Activated CD4-positive, alpha-beta T cell treated with anti-CD3 and anti-CD28 coated beads for 36 hours (primary cell): ENCODE measurements at regions of chr19 and their contacts with region 1.

Region 1: GRCh38 chr19:12052497-12053169 is at the start of gene ZNF878:
- DNase-seq: peak; percentile 82
- ATAC-seq: peak; percentile 95
- H3K4me3 Mint-ChIP-seq: peak within 1 kb of the TSS; percentile 66
- H3K27ac Mint-ChIP-seq: peak within 1 kb of the TSS; percentile 2
- H3K4me1 Mint-ChIP-seq: peaks cover 9% of the 10 kb centered on the region
- H3K27me3 Mint-ChIP-seq: peaks cover 14% of the 10 kb centered on the region
- total RNA-seq, gene ZNF878: 1.1 TPM

Region 2: DNA sequence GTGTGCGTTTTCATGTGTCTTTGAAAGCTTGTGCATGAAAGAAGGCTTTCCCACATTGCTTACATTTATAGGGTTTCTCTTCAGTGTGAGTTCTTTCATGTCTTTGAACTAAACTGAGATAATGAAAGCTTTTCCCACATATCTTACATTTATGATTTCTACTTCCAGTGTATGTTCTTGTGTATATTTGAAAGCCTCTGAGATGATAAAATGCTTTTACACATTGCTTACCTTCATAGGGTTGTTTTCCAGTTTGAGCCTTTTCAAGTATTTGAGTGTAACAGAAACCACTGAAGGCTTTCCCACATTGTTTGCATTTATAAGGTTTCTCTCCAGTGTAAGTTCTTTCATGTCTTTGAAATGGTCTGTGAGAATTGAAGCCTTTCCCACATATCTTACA is 295.7 kb before region 1 on chr19:
- CTCF ChIA-PET with region 1: no interaction called
- POLR2A ChIA-PET with region 1: no interaction called
- intact Hi-C with region 1: no loop called
- DNase-seq: no peak
- ATAC-seq: no peak
- H3K4me3 Mint-ChIP-seq: no peak overlapping the region
- H3K27ac Mint-ChIP-seq: no peak overlapping the region
- H3K4me1 Mint-ChIP-seq: no peaks in the 10 kb centered on the region
- H3K27me3 Mint-ChIP-seq: peaks cover 11% of the 10 kb centered on the region

Region 3: DNA sequence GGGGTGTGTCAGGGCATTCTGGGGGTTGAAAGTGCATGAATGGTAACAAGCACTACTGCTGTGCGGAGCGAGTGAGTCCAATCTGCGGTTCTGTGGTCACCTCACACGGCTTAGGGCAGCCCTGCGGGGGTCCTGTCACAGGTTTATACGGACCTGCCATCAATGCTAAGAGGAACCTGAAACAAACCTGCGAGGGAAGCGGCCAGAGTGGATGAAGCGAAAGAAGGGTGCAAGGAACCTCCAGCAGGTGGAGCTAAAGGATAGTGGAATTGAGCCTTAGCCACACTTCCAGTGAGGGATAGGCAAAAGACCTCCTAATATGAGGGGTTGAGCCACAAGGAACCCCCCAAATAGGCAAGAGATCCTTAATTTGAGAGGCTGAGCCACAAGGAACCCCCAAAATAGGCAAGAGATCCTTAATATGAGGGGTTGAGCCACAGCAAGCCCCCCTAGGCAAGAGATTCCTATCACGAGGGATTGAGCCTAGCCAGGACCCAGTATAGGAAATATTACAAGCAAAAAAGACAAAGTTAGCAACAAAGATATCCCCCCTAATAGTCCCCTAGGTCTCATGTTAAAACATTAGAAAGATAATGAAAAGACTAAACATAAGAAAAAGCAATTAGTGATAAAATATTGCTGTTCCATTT is 171.4 kb before region 1 on chr19:
- CTCF ChIA-PET with region 1: interaction called, 3 read pairs
- POLR2A ChIA-PET with region 1: no interaction called
- intact Hi-C with region 1: loop called in 1 of 2 experiments (anchors 5 kb)
- DNase-seq: peak; percentile 75
- ATAC-seq: peak; percentile 77
- H3K4me3 Mint-ChIP-seq: no peak overlapping the region
- H3K27ac Mint-ChIP-seq: no peak overlapping the region
- H3K4me1 Mint-ChIP-seq: no peaks in the 10 kb centered on the region
- H3K27me3 Mint-ChIP-seq: no peaks in the 10 kb centered on the region

Region 4: GRCh38 chr19:11964858-11965645 is 87.6 kb before region 1 on chr19 and contains the start of gene ZNF763:
- CTCF ChIA-PET with region 1: interaction called, 5 read pairs
- POLR2A ChIA-PET with region 1: no interaction called
- intact Hi-C with region 1: loop called in 1 of 2 experiments (anchors 1 kb)
- DNase-seq: peak; percentile 94
- ATAC-seq: peak; percentile 98
- H3K4me3 Mint-ChIP-seq: peak within 1 kb of the TSS; percentile 84
- H3K27ac Mint-ChIP-seq: peak within 1 kb of the TSS; percentile 73
- H3K4me1 Mint-ChIP-seq: peaks cover 20% of the 10 kb centered on the region
- H3K27me3 Mint-ChIP-seq: no peaks in the 10 kb centered on the region
- total RNA-seq, gene ZNF763: 1.1 to 1.2 TPM

Region 5: DNA sequence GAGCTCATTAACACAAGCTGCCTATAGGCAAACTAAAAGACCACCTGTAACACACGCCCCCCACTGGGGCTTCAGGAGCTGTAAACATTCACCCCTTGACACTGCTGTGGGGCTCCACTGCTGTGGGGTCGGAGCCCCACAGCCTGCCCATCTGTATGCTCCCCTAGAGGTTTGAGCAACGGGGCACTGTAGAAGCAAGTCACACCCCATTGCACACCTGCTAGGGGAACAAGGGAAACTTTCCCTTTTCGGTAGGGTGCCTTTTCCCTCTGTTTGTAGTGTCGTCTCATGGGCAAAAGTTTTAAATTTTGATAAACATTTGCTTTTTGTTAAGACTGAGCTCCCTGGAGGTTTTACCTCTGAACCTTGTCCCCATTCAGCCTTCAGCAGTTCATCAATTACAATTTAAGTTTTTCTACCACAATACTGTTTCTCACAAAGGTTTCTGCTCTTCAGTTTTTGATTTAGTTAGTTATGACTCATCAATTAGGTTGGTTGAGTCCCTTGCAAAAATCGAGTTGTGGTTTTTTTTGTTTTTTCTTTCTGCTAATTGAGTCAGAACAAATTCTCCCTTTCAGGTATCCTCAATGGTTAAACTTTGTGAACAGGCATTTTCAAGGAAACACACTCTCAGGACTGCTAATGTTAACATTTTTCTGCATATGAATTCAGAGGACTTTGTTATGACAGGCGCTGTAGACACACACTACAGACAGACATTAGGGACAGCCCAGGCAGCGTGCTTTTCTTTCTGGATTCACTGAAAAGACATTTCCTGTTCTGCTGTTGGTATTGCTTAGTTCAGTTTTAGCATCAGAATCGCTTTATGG is 52.3 kb before region 1 on chr19:
- CTCF ChIA-PET with region 1: no interaction called
- POLR2A ChIA-PET with region 1: no interaction called
- intact Hi-C with region 1: loop called in 1 of 2 experiments (anchors 2 kb)
- DNase-seq: peak; percentile 57
- ATAC-seq: peak; percentile 96
- H3K4me3 Mint-ChIP-seq: no peak overlapping the region
- H3K27ac Mint-ChIP-seq: peak overlapping the region; percentile 81
- H3K4me1 Mint-ChIP-seq: peaks cover 23% of the 10 kb centered on the region
- H3K27me3 Mint-ChIP-seq: no peaks in the 10 kb centered on the region